BJ (cell line): ENCODE measurements at regions of chr15 and their contacts with region 1.

Region 1: DNA sequence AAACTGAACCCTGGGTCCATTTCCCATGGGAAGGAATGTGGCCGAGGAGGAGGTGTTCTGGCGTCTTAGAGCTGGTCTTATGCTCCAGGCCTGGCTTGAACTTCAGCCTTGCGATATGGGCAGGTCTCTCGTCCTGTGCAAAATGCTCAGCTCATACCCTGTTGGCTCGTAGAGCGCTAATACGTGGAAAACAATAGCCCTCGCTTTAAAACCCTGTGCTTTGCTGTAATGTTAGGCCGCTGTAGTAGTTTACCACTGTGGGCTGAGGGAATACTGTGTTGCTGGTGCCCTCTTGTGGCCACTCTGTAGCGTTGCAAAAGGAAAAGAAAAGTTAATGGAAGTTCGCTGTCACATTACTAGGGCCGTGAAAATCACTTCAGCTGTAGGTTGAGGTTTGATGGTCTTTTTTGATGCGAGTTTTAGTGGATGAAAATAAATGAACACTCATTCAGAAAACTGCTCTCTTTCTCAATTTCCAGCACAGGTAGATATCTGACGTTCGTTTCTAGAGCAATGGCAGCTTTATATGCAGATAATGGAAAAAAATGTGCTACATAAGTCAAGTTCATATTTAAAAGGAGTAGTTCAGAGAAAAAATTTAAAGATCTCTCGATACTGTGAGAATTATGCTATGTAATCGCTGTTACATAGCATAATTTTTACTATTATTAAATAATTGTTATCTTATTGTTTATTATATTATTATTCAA is 92.9 kb downstream of the MCTP2 start:
- DNase-seq: no peak
- H3K4me3 ChIP-seq: no peak overlapping the region
- H3K27me3 ChIP-seq: no peaks in the 10 kb centered on the region
- CTCF ChIP-seq: peak; percentile 90

Region 2: DNA sequence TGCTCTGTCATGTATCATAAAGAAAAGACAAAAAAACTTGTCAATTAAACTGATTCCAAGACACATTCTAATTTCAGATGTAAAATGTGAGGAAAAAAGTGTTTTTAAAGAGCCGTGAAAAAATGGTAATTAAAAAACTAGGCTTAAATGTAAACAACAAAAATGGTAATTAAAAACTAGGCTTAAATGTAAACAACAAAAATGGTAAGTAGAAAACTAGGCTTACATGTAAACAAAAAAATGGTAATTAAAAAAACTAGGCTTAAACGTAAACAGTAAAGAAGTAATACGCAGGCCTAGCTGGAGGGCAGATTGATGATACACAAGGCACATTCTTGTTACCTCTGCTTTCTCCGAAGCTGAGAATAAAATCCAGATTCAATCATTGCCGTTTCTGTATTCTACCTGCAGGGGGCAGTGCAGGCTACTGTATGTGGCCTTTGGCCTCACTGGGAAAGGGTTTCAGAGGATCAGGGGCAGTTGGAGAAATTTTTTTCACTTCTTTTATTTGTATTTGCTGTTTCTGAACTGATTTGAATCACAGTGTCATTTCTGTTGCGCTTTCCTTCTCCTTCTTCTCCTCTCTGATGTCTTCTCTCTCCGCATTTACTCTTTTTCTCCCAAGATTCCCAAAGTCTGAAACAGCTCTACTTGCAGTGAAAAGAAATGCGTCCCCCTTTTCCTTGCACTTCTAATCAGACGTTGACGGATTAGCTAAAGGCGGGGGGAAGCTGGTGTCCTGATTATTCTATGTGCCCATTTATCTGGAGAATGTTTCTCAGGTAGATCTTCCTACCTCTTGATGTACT is 160.1 kb before region 1 on chr15:
- CTCF ChIA-PET with region 1: interaction called, 336 read pairs
- POLR2A ChIA-PET with region 1: no interaction called
- DNase-seq: no peak
- H3K4me3 ChIP-seq: no peak overlapping the region
- H3K27me3 ChIP-seq: no peaks in the 10 kb centered on the region
- CTCF ChIP-seq: peak; percentile 76

Region 3: DNA sequence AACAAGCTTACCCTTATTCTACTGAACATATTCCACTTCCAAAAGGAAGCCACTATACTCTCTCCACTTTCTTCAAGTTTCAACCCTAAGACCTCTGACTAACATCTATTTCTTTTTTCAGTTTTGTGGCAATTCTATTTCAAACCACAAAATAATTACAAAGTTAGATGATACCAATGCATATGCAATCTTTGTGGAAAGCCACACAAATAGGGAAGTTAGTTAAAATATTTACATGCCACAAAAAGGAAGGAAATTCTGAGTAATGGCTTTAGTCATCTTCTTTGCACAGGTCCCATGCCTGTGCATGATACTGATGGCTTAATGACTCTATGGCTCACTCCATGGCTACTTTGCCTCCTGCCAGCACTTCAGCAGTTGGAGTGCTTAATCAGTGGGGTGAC is 149.9 kb before region 1 on chr15:
- CTCF ChIA-PET with region 1: interaction called, 24 read pairs
- POLR2A ChIA-PET with region 1: no interaction called
- DNase-seq: peak; percentile 66
- H3K4me3 ChIP-seq: no peak overlapping the region
- H3K27me3 ChIP-seq: no peaks in the 10 kb centered on the region
- CTCF ChIP-seq: no peak

Region 4: DNA sequence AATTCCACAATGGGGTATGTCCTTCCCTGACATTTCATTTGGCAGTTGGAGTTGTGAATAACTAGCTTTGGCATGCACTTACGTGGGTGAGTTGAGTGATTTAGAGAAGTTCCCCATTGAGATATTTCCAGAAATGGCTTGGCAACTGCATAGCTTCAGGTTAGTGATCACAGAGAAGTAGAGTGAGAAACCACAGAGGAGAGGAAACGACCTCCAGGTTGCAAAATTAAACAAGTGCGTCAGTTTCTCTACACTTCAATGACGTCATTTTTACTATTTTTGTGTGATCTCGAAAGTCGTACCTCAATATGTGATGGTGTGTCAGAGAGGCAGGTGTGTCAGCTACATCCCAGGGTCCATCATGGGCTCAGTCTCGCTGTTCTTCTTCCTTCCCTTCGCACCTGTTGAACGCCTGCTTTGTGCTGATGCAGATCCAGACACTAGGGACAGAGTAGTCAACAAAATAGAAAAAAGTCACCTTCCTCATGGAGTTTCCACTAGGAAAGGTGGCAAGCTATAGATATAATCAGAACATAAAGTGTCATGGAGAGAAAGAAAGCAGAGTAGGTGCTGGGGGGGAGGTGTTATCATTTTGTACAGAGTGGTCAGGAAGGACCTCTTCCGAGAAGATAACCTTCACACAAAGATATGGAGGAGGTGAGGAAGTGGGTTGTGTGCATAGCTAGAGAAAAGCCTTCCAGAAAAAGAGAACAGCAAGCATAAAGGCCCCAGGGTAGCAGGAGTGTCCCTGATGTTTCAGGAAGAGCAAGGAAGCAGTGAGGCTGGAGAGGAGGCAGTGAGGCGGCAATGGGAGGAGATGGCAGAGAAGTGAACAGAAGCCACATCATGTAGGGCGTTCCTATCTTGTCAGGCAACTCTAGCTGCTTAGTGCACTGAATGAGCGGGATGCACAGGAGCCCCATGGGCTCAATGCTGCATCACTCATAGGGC is 17.3 kb before region 1 on chr15:
- CTCF ChIA-PET with region 1: interaction called, 12 read pairs
- POLR2A ChIA-PET with region 1: no interaction called
- DNase-seq: no peak
- H3K4me3 ChIP-seq: no peak overlapping the region
- H3K27me3 ChIP-seq: no peaks in the 10 kb centered on the region
- CTCF ChIP-seq: no peak

Region 5: DNA sequence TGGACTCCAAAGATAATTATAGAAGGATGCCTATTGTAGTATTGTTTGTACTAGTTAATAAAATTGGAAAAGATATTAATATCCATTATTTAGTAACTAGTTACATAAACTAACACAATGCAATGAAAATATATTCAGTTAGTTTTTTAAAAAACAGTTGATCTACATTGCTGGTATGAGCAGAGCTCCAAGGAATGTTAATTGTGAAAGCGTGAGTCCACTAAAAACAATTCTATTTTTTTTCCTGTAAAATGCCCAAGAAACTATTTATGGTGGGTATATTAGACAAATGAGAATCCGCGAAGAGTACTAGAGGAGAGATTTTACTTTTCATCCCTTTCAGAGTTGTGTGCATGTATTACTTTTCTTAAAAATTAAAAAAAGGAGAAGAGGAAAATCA is 11.3 kb after region 1 on chr15:
- CTCF ChIA-PET with region 1: interaction called, 44 read pairs
- POLR2A ChIA-PET with region 1: no interaction called
- DNase-seq: no peak
- H3K4me3 ChIP-seq: no peak overlapping the region
- H3K27me3 ChIP-seq: no peaks in the 10 kb centered on the region
- CTCF ChIP-seq: no peak